OCI-LY7 (cell line): ENCODE measurements at regions of chr13 and their contacts with region 1.

Region 1: GRCh38 chr13:91111476-91112201 is 235.8 kb upstream of the MIR17HG start:
- DNase-seq: no peak
- H3K4me3 ChIP-seq: no peak overlapping the region
- H3K27ac ChIP-seq: no peak overlapping the region
- H3K4me1 ChIP-seq: no peaks in the 10 kb centered on the region
- CTCF ChIP-seq: no peak

Region 2: GRCh38 chr13:91086936-91087716 is 24.5 kb before region 1 on chr13:
- CTCF ChIA-PET with region 1: no interaction called
- POLR2A ChIA-PET with region 1: no interaction called
- intact Hi-C with region 1: no loop called
- DNase-seq: no peak
- H3K4me3 ChIP-seq: no peak overlapping the region
- H3K27ac ChIP-seq: no peak overlapping the region
- H3K4me1 ChIP-seq: no peaks in the 10 kb centered on the region
- CTCF ChIP-seq: no peak

Region 3: DNA sequence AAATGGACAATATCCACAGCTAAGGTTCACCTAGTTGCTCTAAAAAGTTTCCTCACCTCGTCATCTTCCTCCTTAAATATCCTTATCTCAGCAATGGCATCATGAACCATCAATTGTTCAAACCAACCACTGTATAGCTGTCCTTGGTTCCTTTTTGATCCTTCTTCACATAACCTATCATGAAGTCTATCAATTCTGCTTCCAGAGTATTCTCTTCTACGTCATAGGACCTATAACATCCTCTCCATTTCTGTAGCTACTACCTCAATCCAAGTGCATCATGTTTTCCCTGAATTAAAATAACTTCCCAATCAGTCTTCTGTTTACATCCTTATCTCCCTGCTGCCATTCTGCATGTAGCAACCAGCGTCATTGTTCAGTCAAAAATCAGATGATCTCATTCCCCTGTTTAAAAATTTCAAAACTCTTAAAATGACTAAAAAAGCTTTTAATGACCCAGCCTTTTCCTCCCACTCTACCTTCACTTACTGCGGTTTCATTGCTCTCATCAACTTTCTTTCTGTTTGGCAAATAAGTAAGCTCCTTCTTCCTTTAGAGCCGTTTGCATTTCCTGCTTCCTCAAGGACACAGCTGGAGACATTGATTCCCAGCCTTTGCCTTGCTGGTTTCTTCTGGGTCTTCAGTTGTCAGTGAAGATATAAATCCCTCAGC is 12.0 kb after region 1 on chr13:
- CTCF ChIA-PET with region 1: no interaction called
- POLR2A ChIA-PET with region 1: interaction called, 15 read pairs
- intact Hi-C with region 1: no loop called
- DNase-seq: no peak
- H3K4me3 ChIP-seq: no peak overlapping the region
- H3K27ac ChIP-seq: no peak overlapping the region
- H3K4me1 ChIP-seq: no peaks in the 10 kb centered on the region
- CTCF ChIP-seq: no peak

Region 4: GRCh38 chr13:91836554-91836953 is 724.9 kb after region 1 on chr13:
- CTCF ChIA-PET with region 1: no interaction called
- POLR2A ChIA-PET with region 1: no interaction called
- intact Hi-C with region 1: no loop called
- DNase-seq: no peak
- H3K4me3 ChIP-seq: no peak overlapping the region
- H3K27ac ChIP-seq: no peak overlapping the region
- H3K4me1 ChIP-seq: no peaks in the 10 kb centered on the region
- CTCF ChIP-seq: no peak